ENCODE measurements at regions of chr12 and their contacts with region 1.

Region 1: DNA sequence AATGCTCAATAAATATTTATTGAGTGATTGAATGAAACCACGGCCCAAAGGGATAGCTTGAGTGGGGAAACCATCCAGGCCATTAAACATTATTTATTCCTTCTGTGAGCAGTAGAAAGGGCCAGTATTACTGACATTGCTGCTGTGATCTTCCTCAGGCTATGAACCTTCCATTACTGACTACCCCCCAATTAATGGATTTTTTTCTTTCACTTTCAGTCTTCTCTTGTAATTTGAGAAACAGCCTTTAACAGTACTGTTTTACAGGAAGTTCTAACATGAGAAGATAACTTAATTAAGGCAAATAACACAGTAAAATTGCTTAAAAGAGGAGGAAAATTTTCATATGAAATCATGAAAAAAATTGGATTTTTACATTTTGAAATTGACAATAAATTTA is 629.5 kb downstream of the TRHDE start:
- DNase-seq: no peak
- ATAC-seq: no peak
- H3K4me3 ChIP-seq: no peak overlapping the region
- H3K27ac ChIP-seq: no peak overlapping the region
- H3K4me1 ChIP-seq: no peaks in the 10 kb centered on the region
- H3K27me3 ChIP-seq: no peaks in the 10 kb centered on the region
- CTCF ChIP-seq: no peak
- POLR2A ChIP-seq: no peak

Region 2: DNA sequence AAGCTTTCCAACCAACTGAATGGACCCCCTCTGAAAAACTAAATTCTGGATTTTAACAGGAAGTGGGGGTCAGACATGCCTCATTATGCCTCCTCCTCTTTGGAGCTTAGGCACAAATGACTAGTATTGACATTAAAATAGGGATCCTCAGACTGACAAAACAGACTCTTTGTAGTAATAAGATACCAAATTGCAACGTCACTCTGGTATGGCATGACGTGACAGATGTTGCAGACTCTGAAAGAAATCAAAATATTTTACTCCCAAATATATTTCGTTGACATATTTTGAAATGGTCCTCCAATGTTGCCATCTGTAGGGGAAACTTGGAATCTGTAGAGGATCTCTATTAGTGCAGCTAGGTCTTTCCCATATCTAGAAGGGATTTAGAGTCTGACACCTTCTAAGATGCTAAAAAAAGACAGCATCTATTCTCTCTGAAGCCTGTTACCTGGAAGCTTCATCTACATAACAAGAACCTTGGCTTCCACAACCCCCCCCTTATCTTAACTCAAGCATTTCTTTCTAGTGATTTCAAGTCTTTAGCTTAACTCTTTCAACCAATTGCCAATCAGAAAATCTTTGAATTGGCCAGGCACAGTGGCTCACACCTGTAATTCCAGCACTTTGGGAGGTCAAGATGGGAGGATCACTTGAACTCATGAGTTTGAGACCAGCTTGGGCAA is 86.4 kb before region 1 on chr12:
- in situ Hi-C with region 1: loop called in 1 of 4 experiments (anchors 25 kb)
- intact Hi-C with region 1: no loop called
- DNase-seq: no peak
- ATAC-seq: no peak
- H3K4me3 ChIP-seq: no peak overlapping the region
- H3K27ac ChIP-seq: no peak overlapping the region
- H3K4me1 ChIP-seq: no peaks in the 10 kb centered on the region
- H3K27me3 ChIP-seq: no peaks in the 10 kb centered on the region
- CTCF ChIP-seq: no peak
- POLR2A ChIP-seq: no peak

Region 3: DNA sequence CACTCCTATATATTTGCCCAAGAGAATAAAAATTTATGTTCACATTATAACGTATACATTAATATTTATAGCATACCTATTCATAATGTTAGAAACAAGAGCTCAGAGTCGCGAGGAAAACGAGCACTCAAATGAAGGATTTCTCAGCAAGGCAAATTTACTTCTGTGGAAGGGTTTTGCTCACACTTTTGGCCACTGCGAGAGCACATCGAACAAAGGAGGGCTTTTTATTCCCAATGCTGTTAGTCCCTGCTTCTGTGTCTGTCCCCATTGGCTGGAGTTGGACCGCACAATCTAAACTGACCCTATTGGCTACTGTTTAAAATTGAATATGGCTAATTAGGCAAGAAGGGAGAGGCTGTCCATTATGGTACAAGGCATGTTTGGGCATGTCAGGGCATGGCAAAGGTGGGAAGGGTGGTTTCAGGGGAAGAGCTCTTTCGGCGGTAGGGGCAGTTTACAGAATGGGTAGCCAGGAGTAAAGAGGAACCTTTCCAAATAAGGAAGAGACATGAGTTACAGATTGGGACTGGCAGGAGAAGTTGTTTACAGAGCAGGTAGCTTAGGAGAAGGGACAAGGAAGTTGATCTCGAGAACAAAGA is 73.4 kb after region 1 on chr12:
- in situ Hi-C with region 1: no loop called
- intact Hi-C with region 1: no loop called
- DNase-seq: no peak
- ATAC-seq: no peak
- H3K4me3 ChIP-seq: no peak overlapping the region
- H3K27ac ChIP-seq: no peak overlapping the region
- H3K4me1 ChIP-seq: no peaks in the 10 kb centered on the region
- H3K27me3 ChIP-seq: no peaks in the 10 kb centered on the region
- CTCF ChIP-seq: no peak
- POLR2A ChIP-seq: no peak

Measured in gastrocnemius medialis (tissue), 4 donors.